Calu3 (cell line): ENCODE measurements at regions of chr9 and their contacts with region 1.

Region 1: GRCh38 chr9:13598738-13599137 is 319.2 kb upstream of the MPDZ start:
- DNase-seq: no peak
- H3K4me3 Mint-ChIP-seq: no peak overlapping the region
- H3K27ac Mint-ChIP-seq: no peak overlapping the region
- H3K4me1 Mint-ChIP-seq: no peaks in the 10 kb centered on the region
- H3K27me3 Mint-ChIP-seq: no peaks in the 10 kb centered on the region
- CTCF ChIP-seq: no peak

Region 2: DNA sequence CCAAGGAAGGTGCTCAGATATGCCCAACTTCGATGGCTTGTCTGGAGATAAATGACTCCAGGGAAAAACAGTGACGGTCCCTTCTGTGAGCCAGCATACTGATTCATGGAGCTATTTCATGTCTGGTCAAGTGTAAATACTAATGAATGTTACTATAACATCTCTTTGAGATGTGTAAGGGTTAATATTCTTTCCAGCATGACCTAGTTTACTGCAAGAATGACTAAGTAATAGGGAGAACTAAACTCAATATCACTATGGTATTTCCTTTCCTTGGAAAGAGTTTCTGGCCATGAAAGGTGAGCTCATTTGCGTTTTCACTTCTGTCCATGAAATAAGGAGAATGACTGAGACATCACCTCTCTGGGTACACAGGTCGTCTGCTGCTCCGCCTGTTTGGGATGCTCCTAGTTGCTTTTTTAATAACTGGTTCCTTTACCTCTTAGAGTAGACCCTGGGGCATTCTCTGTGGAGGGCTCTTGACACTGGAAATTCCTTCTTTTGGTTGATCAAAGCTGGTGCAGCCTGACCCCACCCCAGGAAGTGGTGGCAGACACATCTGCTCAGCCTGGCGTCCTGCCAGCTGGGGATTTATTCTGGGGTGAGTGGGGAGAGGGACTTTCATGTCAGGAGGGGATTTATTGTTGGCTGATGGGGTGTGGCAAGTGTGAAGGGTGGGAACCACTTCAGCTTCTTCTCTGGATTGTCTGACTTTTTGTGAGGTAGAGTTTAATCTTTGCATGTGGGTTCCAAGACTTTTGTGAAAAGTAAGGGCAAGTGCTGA is 69.2 kb before region 1 on chr9:
- CTCF ChIA-PET with region 1: no interaction called
- intact Hi-C with region 1: loop called (anchors 10 kb)
- DNase-seq: no peak
- H3K4me3 Mint-ChIP-seq: no peak overlapping the region
- H3K27ac Mint-ChIP-seq: no peak overlapping the region
- H3K4me1 Mint-ChIP-seq: no peaks in the 10 kb centered on the region
- H3K27me3 Mint-ChIP-seq: peaks cover 11% of the 10 kb centered on the region
- CTCF ChIP-seq: no peak

Region 3: DNA sequence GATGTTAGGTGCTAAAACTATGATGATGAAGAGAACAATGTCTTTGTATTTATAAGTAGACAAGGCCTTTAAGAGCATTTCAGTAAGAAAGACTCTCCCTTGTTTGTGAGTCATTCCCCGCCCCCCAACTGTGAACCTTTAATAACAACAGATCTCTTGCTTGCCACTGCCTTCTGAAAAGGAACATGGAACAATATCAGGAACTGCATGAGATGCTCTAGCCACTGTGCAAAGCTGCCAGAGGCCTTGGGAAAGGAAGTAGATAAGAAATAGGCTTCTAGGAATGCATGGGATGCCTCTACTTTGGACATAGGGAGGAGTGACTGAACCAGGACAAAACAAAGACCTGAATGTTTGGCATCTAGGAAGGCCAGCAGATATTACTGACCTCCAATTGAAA is 23.2 kb before region 1 on chr9:
- CTCF ChIA-PET with region 1: no interaction called
- intact Hi-C with region 1: no loop called
- DNase-seq: no peak
- H3K4me3 Mint-ChIP-seq: no peak overlapping the region
- H3K27ac Mint-ChIP-seq: no peak overlapping the region
- H3K4me1 Mint-ChIP-seq: no peaks in the 10 kb centered on the region
- H3K27me3 Mint-ChIP-seq: no peaks in the 10 kb centered on the region
- CTCF ChIP-seq: no peak

Region 4: GRCh38 chr9:13628526-13628925 is 29.8 kb after region 1 on chr9:
- CTCF ChIA-PET with region 1: no interaction called
- intact Hi-C with region 1: no loop called
- DNase-seq: no peak
- H3K4me3 Mint-ChIP-seq: no peak overlapping the region
- H3K27ac Mint-ChIP-seq: no peak overlapping the region
- H3K4me1 Mint-ChIP-seq: no peaks in the 10 kb centered on the region
- H3K27me3 Mint-ChIP-seq: no peaks in the 10 kb centered on the region
- CTCF ChIP-seq: no peak